Natural killer cell (primary cell): ENCODE measurements at regions of chr6 and their contacts with region 1.

Region 1: DNA sequence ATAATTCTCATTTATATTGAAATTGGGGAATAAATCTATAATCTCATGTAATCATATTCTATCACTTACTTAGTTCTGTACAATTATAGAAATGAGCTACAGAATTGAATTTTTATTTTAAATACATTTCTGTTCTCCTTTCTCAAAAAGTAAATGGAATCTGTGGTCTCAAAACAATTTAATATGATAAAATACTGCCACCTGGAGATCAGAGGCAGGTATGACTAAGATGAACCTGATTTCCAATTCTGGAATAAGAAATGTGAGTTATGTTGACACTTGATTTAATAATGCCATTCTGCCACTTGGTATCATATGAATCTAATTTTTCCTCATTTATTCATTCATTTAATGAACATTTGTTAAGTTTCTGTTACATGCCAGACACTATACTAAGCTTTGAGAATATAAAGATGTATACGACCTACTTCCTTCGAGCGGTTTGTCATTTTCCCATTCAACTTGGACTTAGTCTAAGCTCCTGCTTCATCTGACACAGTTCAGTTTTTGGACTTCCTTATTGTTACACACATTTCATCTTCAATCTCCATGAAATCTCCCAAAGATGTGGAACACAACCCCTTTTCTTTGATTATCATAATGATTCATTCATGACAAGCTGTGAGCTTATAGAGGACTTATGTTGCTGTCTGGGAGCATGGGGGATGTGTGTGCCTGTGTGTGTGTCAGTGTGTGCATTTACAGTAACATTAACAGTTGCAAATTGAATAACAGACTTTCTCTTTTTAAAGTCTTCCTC is 7.5 kb upstream of the CCDC28A start:
- DNase-seq: peak in 1 of 2 donors; percentile 58
- ATAC-seq: peak in 1 of 3 donors; percentile 47
- H3K4me3 ChIP-seq: no peak overlapping the region
- H3K4me3 Mint-ChIP-seq: no peak overlapping the region
- H3K27ac ChIP-seq: no peak overlapping the region
- H3K27ac Mint-ChIP-seq: no peak overlapping the region
- H3K4me1 ChIP-seq: no peaks in the 10 kb centered on the region
- H3K4me1 Mint-ChIP-seq: no peaks in the 10 kb centered on the region
- H3K27me3 ChIP-seq: no peaks in the 10 kb centered on the region
- H3K27me3 Mint-ChIP-seq: no peaks in the 10 kb centered on the region
- CTCF ChIP-seq: peak; percentile 65

Region 2: GRCh38 chr6:138692058-138692977 is 73.8 kb before region 1 on chr6:
- intact Hi-C with region 1: loop called (anchors 2 kb)
- DNase-seq: peak; percentile 58 to 62
- ATAC-seq: peak; percentile 76
- H3K4me3 ChIP-seq: no peak overlapping the region
- H3K4me3 Mint-ChIP-seq: peak overlapping the region; percentile 86
- H3K27ac ChIP-seq: no peak overlapping the region
- H3K27ac Mint-ChIP-seq: peak overlapping the region in 1 of 2 donors; percentile 17
- H3K4me1 ChIP-seq: peaks cover 9% of the 10 kb centered on the region
- H3K4me1 Mint-ChIP-seq: peaks cover 7 to 11% of the 10 kb centered on the region in 2 donors
- H3K27me3 ChIP-seq: peaks cover 11% of the 10 kb centered on the region
- H3K27me3 Mint-ChIP-seq: peaks cover 16% of the 10 kb centered on the region in 2 donors
- CTCF ChIP-seq: peak; percentile 79

Region 3: GRCh38 chr6:138944412-138944811 is 178.3 kb after region 1 on chr6:
- intact Hi-C with region 1: no loop called
- DNase-seq: peak in 1 of 2 donors; percentile 67
- ATAC-seq: peak; percentile 79 to 96 (median 83)
- H3K4me3 ChIP-seq: no peak overlapping the region
- H3K4me3 Mint-ChIP-seq: peak overlapping the region; percentile 17
- H3K27ac ChIP-seq: peak overlapping the region; percentile 8
- H3K27ac Mint-ChIP-seq: peak overlapping the region; percentile 24 to 73
- H3K4me1 ChIP-seq: peaks cover 4% of the 10 kb centered on the region
- H3K4me1 Mint-ChIP-seq: peaks cover 37 to 42% of the 10 kb centered on the region in 2 donors
- H3K27me3 ChIP-seq: no peaks in the 10 kb centered on the region
- H3K27me3 Mint-ChIP-seq: peaks cover 0 to 2% of the 10 kb centered on the region in 2 donors
- CTCF ChIP-seq: no peak